H1 (cell line): ENCODE measurements at regions of chr3 and their contacts with region 1.

Region 1: DNA sequence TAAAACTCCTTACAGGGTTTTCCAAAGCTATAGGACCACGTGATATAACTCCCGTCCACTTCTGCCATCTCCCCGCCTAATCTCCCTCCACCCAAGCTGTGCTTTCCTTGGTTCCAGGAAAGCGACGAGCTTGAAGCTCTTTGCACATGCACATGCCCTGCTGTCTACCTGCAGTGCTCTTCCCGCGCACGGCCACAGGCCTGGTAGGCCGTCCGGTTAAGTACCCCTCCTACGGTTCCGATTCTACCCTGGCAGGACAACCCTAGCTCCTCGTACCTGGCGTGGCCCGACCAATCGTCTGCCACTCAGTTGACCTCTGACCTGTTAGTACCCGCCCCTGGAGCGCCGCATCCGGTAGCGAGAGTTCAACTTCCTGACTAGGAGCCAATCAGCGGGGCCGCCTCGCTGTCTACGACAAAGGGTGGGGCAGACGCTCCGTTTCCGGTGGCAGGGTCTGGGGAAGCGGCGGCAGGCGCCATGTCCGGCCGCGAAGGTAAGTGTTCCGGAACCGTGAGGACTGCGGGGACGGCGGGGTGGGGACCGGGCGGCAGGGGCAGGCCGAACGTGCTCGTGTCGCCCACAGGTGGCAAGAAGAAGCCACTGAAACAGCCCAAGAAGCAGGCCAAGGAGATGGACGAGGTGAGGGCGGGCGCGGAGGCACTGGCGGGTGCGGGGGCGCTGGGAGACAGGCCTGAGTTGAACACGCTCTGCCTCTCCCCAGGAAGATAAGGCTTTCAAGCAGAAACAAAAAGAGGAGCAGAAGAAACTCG is at the starts of genes CCDC51 and TMA7:
- DNase-seq: peak; percentile 94 to 97
- H3K4me3 ChIP-seq: peak within 1 kb of the TSS; percentile 80 to 99 (median 94)
- H3K27ac ChIP-seq: peak within 1 kb of the TSS; percentile 80
- H3K4me1 ChIP-seq: peaks cover 0 to 8% (median 3%) of the 10 kb centered on the region in 4 experiments; a peak in 5 of 7 replicates
- H3K27me3 ChIP-seq: no peaks in the 10 kb centered on the region
- CTCF ChIP-seq: no peak
- EP300 ChIP-seq: no peak
- POLR2A ChIP-seq: peak; percentile 77 to 88; a peak in 2 of 3 replicates
- RAD21 ChIP-seq: no peak
- total RNA-seq, gene CCDC51: 20.3 and 21.3 TPM in 2 replicates
- total RNA-seq, gene TMA7: 305 and 322 TPM in 2 replicates

Region 2: GRCh38 chr3:48194446-48195071 is 245.4 kb before region 1 on chr3:
- CTCF ChIA-PET with region 1: interaction called, 23 read pairs
- POLR2A ChIA-PET with region 1: interaction called, 7 read pairs
- DNase-seq: peak; percentile 23 to 95
- H3K4me3 ChIP-seq: no peak overlapping the region
- H3K27ac ChIP-seq: no peak overlapping the region
- H3K4me1 ChIP-seq: peaks cover 2 to 11% (median 5%) of the 10 kb centered on the region in 4 experiments
- H3K27me3 ChIP-seq: no peaks in the 10 kb centered on the region
- CTCF ChIP-seq: peak; percentile 67 to 91 (median 78)
- EP300 ChIP-seq: no peak
- POLR2A ChIP-seq: no peak
- RAD21 ChIP-seq: peak; percentile 91 to 93

Region 3: GRCh38 chr3:48285132-48285531 is 154.9 kb before region 1 on chr3:
- CTCF ChIA-PET with region 1: interaction called, 138 read pairs
- POLR2A ChIA-PET with region 1: no interaction called
- DNase-seq: no peak
- H3K4me3 ChIP-seq: no peak overlapping the region
- H3K27ac ChIP-seq: no peak overlapping the region
- H3K4me1 ChIP-seq: no peaks in the 10 kb centered on the region
- H3K27me3 ChIP-seq: no peaks in the 10 kb centered on the region; a peak in 1 of 7 replicates
- CTCF ChIP-seq: no peak
- EP300 ChIP-seq: no peak
- POLR2A ChIP-seq: no peak
- RAD21 ChIP-seq: no peak

Region 4: DNA sequence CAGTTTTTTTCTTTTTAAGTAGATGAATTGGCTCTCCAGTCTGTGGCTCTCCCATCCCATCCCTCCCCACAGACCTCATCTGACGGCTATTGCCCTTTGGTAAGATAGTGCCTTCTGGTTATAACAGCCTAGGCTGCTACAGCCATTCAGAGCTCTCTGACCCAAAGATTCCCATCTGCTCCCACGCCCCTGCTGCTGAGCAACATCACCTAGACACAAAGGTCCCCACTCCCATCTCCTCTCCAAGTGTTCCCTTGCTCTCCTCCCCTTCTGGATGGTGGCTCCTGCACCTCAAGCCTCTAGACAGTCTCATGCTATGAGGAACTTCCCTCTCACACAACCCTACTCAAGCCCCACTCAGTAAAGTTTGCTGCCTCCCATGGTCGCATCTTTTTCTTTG is 44.3 kb before region 1 on chr3:
- CTCF ChIA-PET with region 1: interaction called, 220 read pairs
- POLR2A ChIA-PET with region 1: interaction called, 650 read pairs
- DNase-seq: no peak
- H3K4me3 ChIP-seq: no peak overlapping the region
- H3K27ac ChIP-seq: no peak overlapping the region
- H3K4me1 ChIP-seq: peaks cover 0 to 7% (median 4%) of the 10 kb centered on the region in 4 experiments; a peak in 3 of 7 replicates
- H3K27me3 ChIP-seq: no peaks in the 10 kb centered on the region
- CTCF ChIP-seq: no peak
- EP300 ChIP-seq: no peak
- POLR2A ChIP-seq: no peak
- RAD21 ChIP-seq: no peak

Region 5: DNA sequence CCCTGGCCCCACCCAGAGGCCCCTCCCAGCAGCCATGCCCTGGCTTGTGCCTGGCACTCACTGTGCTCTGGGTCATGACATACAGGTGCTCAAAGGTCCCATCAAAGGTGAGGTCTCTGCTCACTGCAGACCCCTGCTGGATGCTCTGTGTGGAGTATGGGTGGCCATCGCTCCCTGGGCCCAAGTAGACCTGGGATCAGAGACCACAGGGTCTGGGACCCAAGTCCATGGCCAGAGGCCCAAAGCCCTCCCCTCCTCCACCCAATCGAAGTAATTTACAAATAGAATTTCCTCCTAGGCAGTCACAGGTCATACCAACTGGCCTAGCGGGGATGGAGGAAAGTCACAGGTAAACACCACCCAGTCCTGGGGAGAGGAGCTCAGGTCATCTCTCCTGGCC is 17.7 kb before region 1 on chr3:
- CTCF ChIA-PET with region 1: interaction called, 47 read pairs
- POLR2A ChIA-PET with region 1: interaction called, 650 read pairs
- DNase-seq: no peak
- H3K4me3 ChIP-seq: no peak overlapping the region
- H3K27ac ChIP-seq: no peak overlapping the region
- H3K4me1 ChIP-seq: peaks cover 0 to 22% (median 4%) of the 10 kb centered on the region in 4 experiments; a peak in 6 of 7 replicates
- H3K27me3 ChIP-seq: no peaks in the 10 kb centered on the region
- CTCF ChIP-seq: peak in 1 of 3 experiments; percentile 28; a peak in 1 of 4 replicates
- EP300 ChIP-seq: no peak
- POLR2A ChIP-seq: no peak
- RAD21 ChIP-seq: peak; percentile 7 to 10; a peak in 1 of 4 replicates

Region 6: GRCh38 chr3:48507351-48508061 is 67.5 kb after region 1 on chr3:
- CTCF ChIA-PET with region 1: interaction called, 13 read pairs
- POLR2A ChIA-PET with region 1: interaction called, 8 read pairs
- DNase-seq: peak; percentile 75 to 80
- H3K4me3 ChIP-seq: no peak overlapping the region
- H3K27ac ChIP-seq: 0 out of 2 replicates have a peak overlapping the region, but pooled peaks have one; percentile 2
- H3K4me1 ChIP-seq: peaks cover 4 to 14% (median 12%) of the 10 kb centered on the region in 4 experiments
- H3K27me3 ChIP-seq: peaks cover 0 to 3% (median 0%) of the 10 kb centered on the region in 4 experiments; a peak in 2 of 7 replicates
- CTCF ChIP-seq: peak in 2 of 3 experiments; percentile 90 to 95; a peak in 3 of 4 replicates
- EP300 ChIP-seq: no peak; a peak in 1 of 3 replicates
- POLR2A ChIP-seq: no peak
- RAD21 ChIP-seq: peak; percentile 93 to 95

Region 7: GRCh38 chr3:48635222-48636021 is 195.4 kb after region 1 on chr3 and contains the start of gene SLC26A6:
- CTCF ChIA-PET with region 1: interaction called, 10 read pairs
- POLR2A ChIA-PET with region 1: interaction called, 3 read pairs
- DNase-seq: peak; percentile 90 to 98
- H3K4me3 ChIP-seq: peak within 1 kb of the TSS; percentile 75 to 84 (median 84)
- H3K27ac ChIP-seq: peak within 1 kb of the TSS; percentile 58; the same call in 1 of the 2 replicates
- H3K4me1 ChIP-seq: peaks cover 3 to 6% (median 5%) of the 10 kb centered on the region in 4 experiments
- H3K27me3 ChIP-seq: no peaks in the 10 kb centered on the region; a peak in 1 of 7 replicates
- CTCF ChIP-seq: peak in 2 of 3 experiments; percentile 76 to 86; a peak in 3 of 4 replicates
- EP300 ChIP-seq: no peak
- POLR2A ChIP-seq: peak in 1 of 2 experiments; percentile 81; a peak in 1 of 3 replicates
- RAD21 ChIP-seq: peak; percentile 55 to 67
- total RNA-seq, gene SLC26A6: 50.4 and 51.2 TPM in 2 replicates